RWPE1 (cell line): ENCODE measurements at regions of chr15 and their contacts with region 1.

Region 1: GRCh38 chr15:69410290-69410874 is 3.8 kb upstream of the KIF23 start:
- DNase-seq: peak; percentile 91
- H3K27ac ChIP-seq: no peak overlapping the region
- CTCF ChIP-seq: peak; percentile 81

Region 2: GRCh38 chr15:69394556-69395282 is 15.7 kb before region 1 on chr15:
- CTCF ChIA-PET with region 1: interaction called, 10 read pairs
- POLR2A ChIA-PET with region 1: no interaction called
- DNase-seq: peak; percentile 81
- H3K27ac ChIP-seq: peak overlapping the region; percentile 74
- CTCF ChIP-seq: peak; percentile 99